Breast epithelium (tissue), 4 donors: ENCODE measurements at regions of chr10 and their contacts with region 1.

Region 1: DNA sequence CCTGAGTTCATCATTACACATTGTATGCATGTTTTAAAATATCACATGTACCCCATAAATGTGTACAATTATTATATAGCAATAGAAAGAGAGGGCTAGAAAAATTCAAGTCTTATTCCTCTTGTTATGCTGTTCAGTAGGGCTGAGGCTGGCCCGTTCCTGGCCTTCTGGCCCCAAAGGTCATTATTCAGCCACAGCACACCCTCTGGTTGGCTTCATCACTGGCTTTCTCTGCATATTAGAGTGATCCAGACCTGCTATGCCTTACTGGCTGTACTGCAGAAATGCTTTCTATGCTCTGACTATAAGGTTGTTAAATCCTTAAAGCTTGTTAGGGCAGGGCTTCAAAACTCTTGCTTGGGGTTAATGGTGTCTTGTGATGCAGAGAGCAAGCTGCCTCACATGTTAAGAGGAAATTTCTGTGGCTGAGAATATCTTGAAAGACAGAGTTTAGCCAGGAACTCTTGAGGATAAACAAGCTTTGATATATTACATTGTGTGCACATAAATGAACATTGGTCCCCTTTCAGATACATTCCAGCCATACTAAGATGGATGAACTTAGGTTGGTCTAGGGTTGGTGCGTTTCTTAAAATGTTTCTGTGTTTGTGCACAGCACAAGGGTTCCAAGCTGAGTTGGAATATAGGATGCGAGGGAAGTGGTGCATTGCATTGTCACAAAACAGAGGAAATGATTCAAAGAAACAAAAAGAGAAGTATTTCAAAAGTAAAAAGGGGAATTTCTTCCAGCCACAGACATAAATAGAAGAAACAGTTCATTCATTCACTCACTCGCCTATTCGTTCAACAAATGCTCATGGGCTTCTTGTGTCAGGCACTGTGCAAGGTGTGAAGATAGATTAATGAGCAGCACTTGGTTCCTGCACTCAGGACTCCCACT is 61.6 kb upstream of the WDR11 start:
- DNase-seq: no peak
- H3K4me3 ChIP-seq: no peak overlapping the region
- H3K27ac ChIP-seq: no peak overlapping the region
- H3K4me1 ChIP-seq: no peaks in the 10 kb centered on the region
- H3K27me3 ChIP-seq: no peaks in the 10 kb centered on the region
- CTCF ChIP-seq: no peak
- POLR2A ChIP-seq: no peak

Region 2: DNA sequence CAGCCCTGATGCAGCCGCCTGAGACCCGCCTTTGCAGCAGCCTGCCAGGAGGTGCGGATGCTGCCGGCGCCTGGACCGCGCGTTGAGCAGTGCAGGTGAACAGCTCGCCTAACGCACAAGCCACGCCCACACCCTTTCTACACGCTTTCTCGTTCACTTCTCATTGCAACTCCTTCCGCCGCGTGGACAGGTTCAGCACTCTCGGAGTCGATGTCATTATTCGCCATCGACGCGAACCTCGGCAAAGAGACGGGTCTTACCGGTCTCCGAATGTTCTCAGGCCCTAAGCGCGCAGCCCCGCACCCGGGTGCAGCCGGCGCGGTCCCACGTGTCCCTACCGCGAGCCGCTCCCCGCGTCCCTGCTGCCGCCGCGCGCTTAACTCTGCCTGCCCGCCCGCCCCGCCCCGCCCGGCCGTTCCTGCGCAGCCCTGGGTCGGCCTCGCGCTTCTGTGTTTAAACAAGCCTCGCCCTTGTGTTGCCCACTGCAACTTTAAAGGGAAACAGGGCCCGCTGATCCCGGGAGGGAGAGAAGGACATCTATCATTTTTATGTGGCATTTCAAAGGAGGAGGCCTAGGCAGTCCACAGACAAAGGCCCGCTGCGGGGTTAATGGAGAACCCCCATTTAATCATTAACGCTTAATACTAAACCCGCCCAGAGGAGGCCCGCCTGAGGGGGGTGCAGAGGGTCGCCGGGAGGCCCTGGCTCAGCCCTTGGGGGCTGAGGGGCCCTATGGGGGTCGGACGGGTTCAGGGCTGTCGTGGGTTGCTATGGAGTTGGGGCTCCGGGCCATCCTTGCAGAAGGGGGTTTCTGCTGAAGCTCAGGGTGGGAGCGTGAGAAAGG is 190.1 kb after region 1 on chr10:
- intact Hi-C with region 1: no loop called
- DNase-seq: peak; percentile 28 to 68
- H3K4me3 ChIP-seq: peak overlapping the region; percentile 21 to 55 (median 42)
- H3K27ac ChIP-seq: no peak overlapping the region
- H3K4me1 ChIP-seq: no peaks in the 10 kb centered on the region
- H3K27me3 ChIP-seq: peaks cover 0 to 25% of the 10 kb centered on the region in 2 donors
- CTCF ChIP-seq: no peak
- POLR2A ChIP-seq: no peak

Region 3: GRCh38 chr10:121112579-121113386 is 323.2 kb after region 1 on chr10:
- intact Hi-C with region 1: loop called (anchors 5 kb)
- DNase-seq: no peak
- H3K4me3 ChIP-seq: no peak overlapping the region
- H3K27ac ChIP-seq: no peak overlapping the region
- H3K4me1 ChIP-seq: no peaks in the 10 kb centered on the region
- H3K27me3 ChIP-seq: no peaks in the 10 kb centered on the region
- CTCF ChIP-seq: no peak
- POLR2A ChIP-seq: no peak